ENCODE measurements at regions of chr13 and their contacts with region 1.

Region 1: GRCh38 chr13:79480954-79481684 is at the start of gene NDFIP2:
- DNase-seq: peak; percentile 90
- ATAC-seq: peak; percentile 75
- H3K4me3 Mint-ChIP-seq: peak within 1 kb of the TSS; percentile 82
- H3K27ac Mint-ChIP-seq: peak within 1 kb of the TSS; percentile 91
- H3K4me1 Mint-ChIP-seq: peaks cover 54% of the 10 kb centered on the region
- H3K27me3 Mint-ChIP-seq: peaks cover 5% of the 10 kb centered on the region
- CTCF ChIP-seq: no peak
- total RNA-seq, gene NDFIP2: 67.4 to 69.1 TPM

Region 2: DNA sequence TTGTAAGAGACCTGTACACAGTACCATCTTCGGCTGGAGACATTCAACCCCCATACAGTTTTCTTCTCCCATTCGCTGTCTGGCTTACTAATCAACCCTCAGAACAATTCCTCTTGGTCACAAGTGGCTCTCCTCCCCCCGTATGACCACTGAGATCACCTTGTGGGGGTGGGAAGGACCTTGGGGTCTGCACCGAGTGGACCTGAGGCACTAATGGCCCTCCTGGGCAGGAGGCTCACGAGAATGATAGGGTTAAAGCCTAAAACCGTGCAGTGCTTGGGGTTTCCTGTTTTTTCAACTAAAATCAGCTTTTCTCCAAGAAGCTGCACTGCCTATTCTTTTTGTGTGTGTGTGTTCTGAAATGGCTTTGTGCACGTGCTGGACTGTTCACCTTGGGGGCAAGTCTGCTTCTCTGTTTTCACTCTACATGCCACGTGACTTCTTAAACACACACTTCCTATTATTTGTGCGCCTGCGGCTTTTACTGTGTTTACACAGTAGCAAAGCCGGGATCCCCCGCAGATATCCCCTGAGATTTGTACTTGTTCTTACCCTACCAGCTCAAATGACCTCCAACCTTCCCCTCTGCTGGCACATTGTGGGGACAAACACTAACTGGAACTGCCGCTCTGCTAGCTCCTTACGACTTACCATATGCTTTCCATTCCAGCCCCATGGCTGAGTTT is 87.4 kb before region 1 on chr13:
- CTCF ChIA-PET with region 1: interaction called, 5 read pairs
- POLR2A ChIA-PET with region 1: no interaction called
- intact Hi-C with region 1: loop called (anchors 1 kb)
- DNase-seq: peak; percentile 53
- ATAC-seq: peak; percentile 32
- H3K4me3 Mint-ChIP-seq: peak overlapping the region; percentile 57
- H3K27ac Mint-ChIP-seq: peak overlapping the region; percentile 81
- H3K4me1 Mint-ChIP-seq: peaks cover 71% of the 10 kb centered on the region
- H3K27me3 Mint-ChIP-seq: no peaks in the 10 kb centered on the region
- CTCF ChIP-seq: no peak

Region 3: GRCh38 chr13:79405829-79406596 is 75.1 kb before region 1 on chr13 and contains the start of gene RBM26:
- CTCF ChIA-PET with region 1: interaction called, 4 read pairs
- POLR2A ChIA-PET with region 1: interaction called, 13 read pairs
- intact Hi-C with region 1: no loop called
- DNase-seq: peak; percentile 96
- ATAC-seq: peak; percentile 90
- H3K4me3 Mint-ChIP-seq: no peak within 1 kb of the TSS
- H3K27ac Mint-ChIP-seq: peak within 1 kb of the TSS; percentile 98
- H3K4me1 Mint-ChIP-seq: peaks cover 49% of the 10 kb centered on the region
- H3K27me3 Mint-ChIP-seq: no peaks in the 10 kb centered on the region
- CTCF ChIP-seq: no peak
- total RNA-seq, gene RBM26: 57.6 to 61.1 TPM

Region 4: DNA sequence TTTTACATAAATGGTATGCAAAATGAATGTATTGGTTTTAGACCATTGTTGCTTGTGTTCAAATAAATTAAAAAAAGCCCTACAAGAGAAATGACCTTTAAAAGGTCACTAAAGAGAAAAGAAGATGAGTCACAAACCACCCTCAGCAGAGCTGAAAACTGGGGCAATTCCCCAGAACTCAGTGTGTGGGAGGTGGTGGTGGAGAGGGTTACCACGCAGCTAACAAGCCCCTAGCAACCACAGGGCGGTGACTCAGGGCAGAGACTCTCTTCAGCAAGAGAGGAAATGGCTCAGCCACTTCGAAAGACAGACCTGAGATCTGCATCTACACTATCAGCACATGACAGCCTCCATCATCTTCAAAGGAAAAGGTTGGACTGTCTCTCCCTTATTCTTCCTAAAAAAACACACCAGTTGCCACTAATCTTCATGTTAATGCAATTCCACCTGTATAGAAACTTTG is 29.6 kb before region 1 on chr13:
- CTCF ChIA-PET with region 1: interaction called, 10 read pairs
- POLR2A ChIA-PET with region 1: interaction called, 13 read pairs
- intact Hi-C with region 1: loop called (anchors 1 kb)
- DNase-seq: peak; percentile 98
- ATAC-seq: peak; percentile 96
- H3K4me3 Mint-ChIP-seq: peak overlapping the region; percentile 69
- H3K27ac Mint-ChIP-seq: peak overlapping the region; percentile 94
- H3K4me1 Mint-ChIP-seq: peaks cover 66% of the 10 kb centered on the region
- H3K27me3 Mint-ChIP-seq: no peaks in the 10 kb centered on the region
- CTCF ChIP-seq: no peak

Region 5: GRCh38 chr13:79457948-79458347 is 23.2 kb before region 1 on chr13:
- CTCF ChIA-PET with region 1: interaction called, 10 read pairs
- POLR2A ChIA-PET with region 1: interaction called, 10 read pairs
- intact Hi-C with region 1: no loop called
- DNase-seq: peak; percentile 49
- ATAC-seq: peak; percentile 85
- H3K4me3 Mint-ChIP-seq: no peak overlapping the region
- H3K27ac Mint-ChIP-seq: no peak overlapping the region
- H3K4me1 Mint-ChIP-seq: peaks cover 27% of the 10 kb centered on the region
- H3K27me3 Mint-ChIP-seq: no peaks in the 10 kb centered on the region
- CTCF ChIP-seq: no peak

Region 6: DNA sequence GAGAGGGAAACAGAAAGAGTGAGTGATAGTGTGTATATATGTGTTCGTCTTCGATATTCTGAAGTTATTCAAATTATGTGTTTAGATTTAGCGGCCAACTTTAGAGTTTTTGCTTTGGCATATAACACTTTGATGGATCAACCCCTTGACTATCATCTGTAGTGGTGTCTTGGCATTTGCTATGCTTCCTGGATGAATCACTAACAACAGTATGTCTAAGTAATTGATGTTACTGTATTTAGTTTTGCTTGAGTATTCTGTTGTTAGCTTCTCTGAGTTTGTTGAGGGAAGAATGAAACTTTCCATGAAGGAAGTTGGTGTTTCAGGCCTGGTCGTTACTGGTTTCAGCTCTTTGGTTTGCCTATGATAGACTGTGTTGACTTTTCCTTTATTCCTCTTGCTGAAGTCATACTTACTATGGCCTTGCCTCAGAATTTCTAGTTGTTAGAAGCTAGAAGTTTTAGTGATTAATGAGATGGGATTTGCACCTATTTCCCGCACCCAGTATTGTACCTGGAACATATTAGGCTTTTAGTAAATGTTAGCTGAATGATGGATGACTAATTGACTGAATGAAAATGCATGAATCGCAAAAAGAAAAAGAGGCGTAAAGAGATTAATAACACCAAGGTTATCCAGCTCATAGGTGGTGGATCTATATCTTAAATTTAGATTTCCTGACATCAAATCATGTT is 20.6 kb after region 1 on chr13:
- CTCF ChIA-PET with region 1: interaction called, 5 read pairs
- POLR2A ChIA-PET with region 1: interaction called, 22 read pairs
- intact Hi-C with region 1: no loop called
- DNase-seq: no peak
- ATAC-seq: peak; percentile 77
- H3K4me3 Mint-ChIP-seq: peak overlapping the region; percentile 1
- H3K27ac Mint-ChIP-seq: peak overlapping the region; percentile 84
- H3K4me1 Mint-ChIP-seq: peaks cover 78% of the 10 kb centered on the region
- H3K27me3 Mint-ChIP-seq: no peaks in the 10 kb centered on the region
- CTCF ChIP-seq: no peak

Region 7: DNA sequence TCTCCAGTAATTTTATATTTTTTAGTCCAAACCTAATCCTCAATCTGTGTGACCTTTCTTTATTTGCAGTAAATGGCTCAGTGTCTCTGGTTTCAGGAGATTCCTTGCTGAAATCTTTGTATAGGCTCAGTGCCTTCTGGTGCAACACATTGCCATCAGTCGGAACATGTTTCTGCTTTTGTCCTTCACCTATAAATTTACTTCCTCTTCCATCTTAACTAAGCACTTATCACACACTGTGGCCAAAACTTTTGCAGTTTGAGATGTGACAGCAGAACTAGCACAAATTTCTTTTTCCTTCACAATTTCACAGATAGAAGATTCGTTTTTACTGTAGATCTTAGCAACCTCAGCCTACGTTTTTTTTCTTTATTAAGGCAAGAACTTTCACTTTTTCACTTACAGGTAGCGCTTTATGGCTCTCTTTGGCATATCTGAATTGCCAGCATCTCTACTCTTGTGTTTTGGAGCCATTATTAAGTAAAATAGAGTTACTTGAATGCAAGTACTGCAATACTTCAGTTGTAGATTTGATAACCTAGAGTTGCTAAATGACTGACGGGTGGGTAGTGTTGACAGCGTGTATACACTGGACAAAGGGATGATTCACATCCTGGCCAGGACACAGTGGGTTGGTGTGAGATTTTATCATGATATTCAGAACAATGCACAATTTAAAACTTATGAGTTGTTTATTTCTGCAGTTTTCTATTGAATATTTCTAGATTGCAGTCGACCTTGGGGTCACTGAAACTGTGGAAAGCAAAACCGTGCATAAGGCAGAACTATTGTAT is 44.1 kb after region 1 on chr13:
- CTCF ChIA-PET with region 1: no interaction called
- POLR2A ChIA-PET with region 1: interaction called, 5 read pairs
- intact Hi-C with region 1: loop called (anchors 1 kb)
- DNase-seq: peak; percentile 31
- ATAC-seq: peak; percentile 65
- H3K4me3 Mint-ChIP-seq: no peak overlapping the region
- H3K27ac Mint-ChIP-seq: no peak overlapping the region
- H3K4me1 Mint-ChIP-seq: peaks cover 8% of the 10 kb centered on the region
- H3K27me3 Mint-ChIP-seq: no peaks in the 10 kb centered on the region
- CTCF ChIP-seq: no peak

Region 8: GRCh38 chr13:79604752-79605151 is 123.6 kb after region 1 on chr13:
- CTCF ChIA-PET with region 1: no interaction called
- POLR2A ChIA-PET with region 1: no interaction called
- intact Hi-C with region 1: no loop called
- DNase-seq: no peak
- ATAC-seq: no peak
- H3K4me3 Mint-ChIP-seq: no peak overlapping the region
- H3K27ac Mint-ChIP-seq: no peak overlapping the region
- H3K4me1 Mint-ChIP-seq: no peaks in the 10 kb centered on the region
- H3K27me3 Mint-ChIP-seq: no peaks in the 10 kb centered on the region
- CTCF ChIP-seq: no peak

Measured in activated CD8-positive, alpha-beta T cell treated with anti-CD3 and anti-CD28 coated beads for 36 hours (primary cell).